ENCODE measurements at regions of chr10 and their contacts with region 1.

Region 1: GRCh38 chr10:112949875-112950507 is at the start of gene TCF7L2:
- DNase-seq: peak; percentile 94 to 97
- ATAC-seq: peak; percentile 84 to 88 (median 86)
- H3K4me3 ChIP-seq: peak within 1 kb of the TSS; percentile 80
- H3K27ac ChIP-seq: peak within 1 kb of the TSS; percentile 90
- H3K4me1 ChIP-seq: peaks cover 12% of the 10 kb centered on the region
- H3K27me3 ChIP-seq: no peaks in the 10 kb centered on the region
- CTCF ChIP-seq: no peak
- total RNA-seq, gene TCF7L2: 4.3 to 8.5 (median 5.9) TPM

Region 2: GRCh38 chr10:112721080-112721698 is 228.8 kb before region 1 on chr10:
- intact Hi-C with region 1: loop called in 1 of 2 experiments (anchors 10 kb)
- DNase-seq: no peak
- ATAC-seq: peak in 2 of 4 donors; percentile 54 to 80
- H3K4me3 ChIP-seq: no peak overlapping the region
- H3K27ac ChIP-seq: no peak overlapping the region
- H3K4me1 ChIP-seq: no peaks in the 10 kb centered on the region
- H3K27me3 ChIP-seq: no peaks in the 10 kb centered on the region
- CTCF ChIP-seq: peak; percentile 68

Region 3: GRCh38 chr10:113000876-113001598 is 51.0 kb after region 1 on chr10:
- intact Hi-C with region 1: loop called (anchors 5 to 10 kb)
- DNase-seq: peak; percentile 37 to 80
- ATAC-seq: peak; percentile 93 to 99 (median 98)
- H3K4me3 ChIP-seq: peak overlapping the region; percentile 6
- H3K27ac ChIP-seq: peak overlapping the region; percentile 55
- H3K4me1 ChIP-seq: peaks cover 21% of the 10 kb centered on the region
- H3K27me3 ChIP-seq: no peaks in the 10 kb centered on the region
- CTCF ChIP-seq: peak; percentile 45

Region 4: DNA sequence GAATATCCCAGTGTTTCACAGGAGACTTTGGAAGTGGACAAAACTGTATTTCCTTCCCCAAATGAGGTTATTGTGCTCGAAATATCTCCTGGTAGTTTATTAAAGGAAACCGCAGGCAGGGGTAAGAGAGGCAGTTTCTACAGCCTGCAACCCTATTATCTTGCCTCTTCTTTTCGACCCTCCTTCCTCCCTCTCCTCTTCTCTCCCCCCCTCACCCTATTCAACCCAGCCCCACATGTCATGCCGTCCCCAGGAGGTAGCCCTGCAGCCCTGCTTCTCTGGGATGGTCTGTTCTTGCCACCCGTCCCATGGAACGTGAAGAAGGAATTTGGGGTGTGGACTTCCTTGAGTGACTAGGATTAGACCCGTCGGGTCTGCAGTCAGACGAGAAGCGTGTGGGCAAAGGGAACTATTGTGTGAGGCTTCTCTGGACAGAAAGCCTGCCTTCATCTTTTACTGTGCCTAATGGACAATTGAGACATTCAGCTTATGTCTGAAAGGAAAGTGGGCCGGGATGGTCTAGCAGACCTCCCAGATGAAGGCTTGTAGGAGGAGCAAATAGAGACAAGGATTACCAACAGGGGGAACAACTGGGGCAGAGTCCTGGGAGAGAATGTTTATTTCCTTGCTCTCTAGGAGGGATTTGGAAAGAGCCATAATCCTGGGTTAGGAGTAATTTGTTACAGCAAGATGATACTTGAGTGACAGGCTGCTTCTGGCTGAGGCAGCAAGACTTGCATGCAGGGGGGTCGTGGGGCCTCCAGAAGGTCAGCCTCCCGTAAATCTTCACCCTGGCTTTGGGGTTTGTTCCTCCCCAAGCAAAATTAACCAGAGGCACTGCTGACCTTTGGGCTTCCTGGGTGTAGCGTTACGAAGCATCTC is 77.8 kb after region 1 on chr10:
- intact Hi-C with region 1: loop called in 1 of 2 experiments (anchors 5 kb)
- DNase-seq: no peak
- ATAC-seq: peak; percentile 21 to 70 (median 45)
- H3K4me3 ChIP-seq: peak overlapping the region; percentile 38
- H3K27ac ChIP-seq: peak overlapping the region; percentile 33
- H3K4me1 ChIP-seq: peaks cover 38% of the 10 kb centered on the region
- H3K27me3 ChIP-seq: no peaks in the 10 kb centered on the region
- CTCF ChIP-seq: no peak

Region 5: DNA sequence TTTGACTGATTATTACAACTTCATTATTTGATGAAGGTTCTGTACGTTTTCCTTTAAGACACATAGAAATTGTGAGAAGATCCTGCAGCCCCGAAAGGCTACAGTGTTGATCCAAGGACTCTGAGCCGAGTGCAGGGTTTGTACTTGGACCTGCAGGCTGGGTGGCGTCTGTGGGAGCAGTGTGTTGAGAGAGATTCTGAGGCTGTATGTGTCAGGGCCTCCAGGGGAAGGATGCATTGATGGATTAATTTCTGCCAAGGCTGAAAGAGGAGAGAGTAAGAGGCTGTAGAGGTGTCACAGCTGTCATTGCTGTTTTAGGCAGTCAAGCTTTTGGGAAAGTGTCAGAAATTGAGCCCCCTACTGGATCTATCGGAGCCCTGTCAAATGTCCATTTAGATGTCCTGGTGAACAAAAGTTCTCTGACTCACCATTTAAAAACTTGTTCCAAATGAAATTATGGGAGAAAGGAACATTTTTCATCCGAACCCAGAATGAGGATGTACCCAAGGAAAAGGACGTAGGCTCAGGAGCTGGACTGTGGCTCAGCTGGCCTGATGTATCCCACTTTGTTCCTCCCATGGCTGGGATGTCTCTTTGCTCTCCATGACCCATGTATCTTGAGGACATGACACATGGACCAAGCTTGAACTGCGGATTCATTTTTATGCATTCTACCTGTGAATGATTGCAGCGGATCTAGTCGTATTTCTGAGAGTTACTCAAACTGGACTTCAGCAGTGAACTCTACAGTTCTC is 102.3 kb after region 1 on chr10:
- intact Hi-C with region 1: loop called in 1 of 2 experiments (anchors 10 kb)
- DNase-seq: no peak
- ATAC-seq: peak in 3 of 4 donors; percentile 11 to 61 (median 50)
- H3K4me3 ChIP-seq: no peak overlapping the region
- H3K27ac ChIP-seq: no peak overlapping the region
- H3K4me1 ChIP-seq: peaks cover 14% of the 10 kb centered on the region
- H3K27me3 ChIP-seq: no peaks in the 10 kb centered on the region
- CTCF ChIP-seq: peak; percentile 21

Region 6: DNA sequence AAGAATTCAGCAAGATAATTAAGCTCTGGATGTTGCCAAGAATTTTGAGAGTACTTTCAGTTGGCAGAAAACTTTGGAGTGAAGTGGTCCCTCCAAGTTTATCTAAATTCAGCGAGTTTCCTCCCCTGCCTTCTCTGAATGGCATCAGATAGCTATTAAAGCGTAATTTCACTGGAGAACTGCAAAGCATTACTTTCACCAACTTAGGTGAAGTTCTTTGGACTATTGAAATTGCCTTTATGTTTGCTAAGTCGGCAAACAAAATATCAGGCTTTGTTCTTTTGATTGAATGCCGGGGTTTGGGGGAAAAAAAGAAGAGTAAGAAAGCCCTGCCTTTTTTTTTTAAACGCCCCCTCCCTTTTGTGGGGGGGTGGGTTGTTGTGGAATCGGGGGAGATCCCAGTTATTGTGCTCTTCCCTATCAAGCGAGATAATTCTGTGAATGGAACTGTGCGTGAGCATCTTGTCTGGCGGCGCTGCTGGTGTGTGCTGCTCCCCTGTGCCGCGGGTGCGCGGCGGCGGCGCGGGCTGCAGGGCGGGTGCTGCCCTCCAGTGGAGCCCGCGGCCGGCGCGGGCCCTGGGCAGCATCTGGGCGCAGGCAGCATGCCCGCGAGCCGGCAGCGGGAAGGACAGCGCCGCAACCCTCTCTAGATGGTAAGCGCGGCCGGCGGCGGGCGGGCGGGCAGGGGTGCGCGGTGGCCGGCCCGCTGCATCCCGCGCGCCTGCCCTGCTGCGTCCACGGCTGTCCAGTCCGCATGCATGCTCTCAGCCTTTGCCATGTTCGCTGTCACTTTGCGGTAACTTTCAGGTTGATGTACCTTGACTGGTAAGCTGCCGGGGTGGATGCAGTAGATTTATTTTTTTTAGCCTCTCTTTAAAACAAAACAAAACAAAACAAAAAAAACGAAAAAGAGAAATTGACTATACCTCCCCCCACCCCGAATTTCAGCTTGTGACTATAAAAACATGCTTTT is 176.5 kb after region 1 on chr10:
- intact Hi-C with region 1: loop called in 1 of 2 experiments (anchors 5 kb)
- DNase-seq: peak; percentile 73 to 83
- ATAC-seq: peak; percentile 97 to 99 (median 98)
- H3K4me3 ChIP-seq: peak overlapping the region; percentile 42
- H3K27ac ChIP-seq: no peak overlapping the region
- H3K4me1 ChIP-seq: peaks cover 4% of the 10 kb centered on the region
- H3K27me3 ChIP-seq: no peaks in the 10 kb centered on the region
- CTCF ChIP-seq: peak; percentile 88

Region 7: GRCh38 chr10:113267619-113268562 is 317.9 kb after region 1 on chr10:
- intact Hi-C with region 1: no loop called
- DNase-seq: no peak
- ATAC-seq: no peak
- H3K4me3 ChIP-seq: no peak overlapping the region
- H3K27ac ChIP-seq: no peak overlapping the region
- H3K4me1 ChIP-seq: no peaks in the 10 kb centered on the region
- H3K27me3 ChIP-seq: no peaks in the 10 kb centered on the region
- CTCF ChIP-seq: no peak

Measured in psoas muscle (tissue), 8 donors.